Caco-2 (cell line): ENCODE measurements at regions of chr16 and their contacts with region 1.

Region 1: DNA sequence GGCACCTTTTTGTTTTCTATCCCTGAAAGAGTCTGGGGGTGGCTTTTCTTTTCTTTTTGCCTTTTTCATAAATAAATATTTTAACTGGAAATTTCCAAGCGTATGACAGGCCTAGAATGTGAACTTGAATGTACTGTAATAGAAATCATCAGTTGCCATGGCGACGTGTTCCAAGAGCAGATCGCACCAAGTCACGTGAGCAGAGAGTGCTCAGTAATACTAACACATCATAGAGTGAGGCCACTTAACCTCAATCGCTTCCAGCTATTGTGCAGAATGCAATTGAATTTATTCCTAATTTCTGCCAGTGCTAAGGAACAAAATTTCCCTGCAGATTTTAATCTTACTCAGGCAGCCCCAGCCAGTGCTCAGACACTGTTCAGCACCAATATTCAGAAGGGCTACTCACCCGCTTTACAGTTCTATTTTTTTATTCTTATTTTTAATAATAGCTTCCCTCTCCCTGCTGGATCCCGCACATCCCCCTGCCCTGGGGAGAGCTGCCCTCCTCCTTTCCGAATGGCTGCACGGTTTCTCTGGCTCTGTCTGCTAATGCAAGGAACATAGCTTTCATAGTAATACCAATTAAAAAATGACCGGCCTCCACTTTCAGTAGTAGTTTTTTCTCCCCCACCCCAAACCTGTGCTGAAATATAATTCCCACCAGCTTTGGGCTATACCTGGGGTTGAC is 26.2 kb upstream of the PMFBP1 start:
- DNase-seq: no peak
- H3K4me3 ChIP-seq: no peak overlapping the region
- H3K4me3 Mint-ChIP-seq: no peak overlapping the region
- H3K27ac Mint-ChIP-seq: no peak overlapping the region
- H3K4me1 ChIP-seq: peaks cover 13% of the 10 kb centered on the region
- H3K4me1 Mint-ChIP-seq: peaks cover 12% of the 10 kb centered on the region
- H3K27me3 ChIP-seq: peaks cover 2% of the 10 kb centered on the region
- H3K27me3 Mint-ChIP-seq: peaks cover 13% of the 10 kb centered on the region
- CTCF ChIP-seq: no peak

Region 2: DNA sequence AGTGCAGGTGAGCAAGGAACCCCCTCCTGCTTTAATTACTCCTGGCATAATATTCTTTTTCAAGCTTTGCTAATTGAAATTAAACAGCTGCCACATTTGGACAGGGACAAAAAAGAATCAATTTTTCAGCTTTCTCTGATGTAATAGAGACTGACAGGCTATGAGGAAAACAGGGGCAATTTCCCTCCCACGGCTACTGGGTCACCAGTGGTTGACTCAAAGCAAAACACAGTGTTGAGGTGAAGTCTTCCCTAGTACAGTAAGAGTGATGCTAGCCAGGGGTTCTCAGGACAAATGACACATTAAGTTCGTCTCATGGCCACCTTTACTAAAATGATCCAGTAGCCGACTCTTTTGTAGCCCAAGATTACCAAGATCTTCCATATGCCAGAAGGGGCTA is 12.4 kb after region 1 on chr16:
- CTCF ChIA-PET with region 1: interaction called, 10 read pairs
- POLR2A ChIA-PET with region 1: no interaction called
- intact Hi-C with region 1: no loop called
- DNase-seq: no peak
- H3K4me3 ChIP-seq: no peak overlapping the region
- H3K4me3 Mint-ChIP-seq: no peak overlapping the region
- H3K27ac Mint-ChIP-seq: no peak overlapping the region
- H3K4me1 ChIP-seq: no peaks in the 10 kb centered on the region
- H3K4me1 Mint-ChIP-seq: no peaks in the 10 kb centered on the region
- H3K27me3 ChIP-seq: no peaks in the 10 kb centered on the region
- H3K27me3 Mint-ChIP-seq: peaks cover 9% of the 10 kb centered on the region
- CTCF ChIP-seq: no peak

Region 3: GRCh38 chr16:72236866-72237265 is 38.7 kb after region 1 on chr16:
- CTCF ChIA-PET with region 1: interaction called, 3 read pairs
- POLR2A ChIA-PET with region 1: no interaction called
- intact Hi-C with region 1: loop called (anchors 5 kb)
- DNase-seq: no peak
- H3K4me3 ChIP-seq: no peak overlapping the region
- H3K4me3 Mint-ChIP-seq: no peak overlapping the region
- H3K27ac Mint-ChIP-seq: no peak overlapping the region
- H3K4me1 ChIP-seq: no peaks in the 10 kb centered on the region
- H3K4me1 Mint-ChIP-seq: no peaks in the 10 kb centered on the region
- H3K27me3 ChIP-seq: no peaks in the 10 kb centered on the region
- H3K27me3 Mint-ChIP-seq: peaks cover 3% of the 10 kb centered on the region
- CTCF ChIP-seq: no peak

Region 4: DNA sequence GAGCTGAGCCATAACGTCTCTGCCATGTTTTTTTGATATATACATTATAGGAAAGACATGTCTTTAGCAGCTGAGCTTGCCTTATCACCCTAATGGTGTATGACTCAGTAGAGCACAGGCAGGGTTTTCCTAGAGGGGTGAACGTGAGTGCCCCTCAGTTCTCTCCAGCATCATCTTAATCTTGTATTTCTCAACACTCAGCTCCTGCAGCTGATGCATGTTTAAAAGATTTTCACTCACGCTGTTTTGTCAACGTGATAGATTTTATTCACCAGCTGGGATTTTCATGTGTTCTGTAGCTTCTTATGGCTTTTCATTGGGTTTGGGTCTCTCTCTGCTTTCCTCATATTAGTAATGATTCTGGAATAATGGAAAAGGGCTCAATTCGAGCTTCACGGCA is 159.7 kb after region 1 on chr16:
- CTCF ChIA-PET with region 1: no interaction called
- POLR2A ChIA-PET with region 1: no interaction called
- intact Hi-C with region 1: no loop called
- DNase-seq: no peak
- H3K4me3 ChIP-seq: no peak overlapping the region
- H3K4me3 Mint-ChIP-seq: no peak overlapping the region
- H3K27ac Mint-ChIP-seq: no peak overlapping the region
- H3K4me1 ChIP-seq: no peaks in the 10 kb centered on the region
- H3K4me1 Mint-ChIP-seq: no peaks in the 10 kb centered on the region
- H3K27me3 ChIP-seq: no peaks in the 10 kb centered on the region
- H3K27me3 Mint-ChIP-seq: no peaks in the 10 kb centered on the region
- CTCF ChIP-seq: no peak

Region 5: DNA sequence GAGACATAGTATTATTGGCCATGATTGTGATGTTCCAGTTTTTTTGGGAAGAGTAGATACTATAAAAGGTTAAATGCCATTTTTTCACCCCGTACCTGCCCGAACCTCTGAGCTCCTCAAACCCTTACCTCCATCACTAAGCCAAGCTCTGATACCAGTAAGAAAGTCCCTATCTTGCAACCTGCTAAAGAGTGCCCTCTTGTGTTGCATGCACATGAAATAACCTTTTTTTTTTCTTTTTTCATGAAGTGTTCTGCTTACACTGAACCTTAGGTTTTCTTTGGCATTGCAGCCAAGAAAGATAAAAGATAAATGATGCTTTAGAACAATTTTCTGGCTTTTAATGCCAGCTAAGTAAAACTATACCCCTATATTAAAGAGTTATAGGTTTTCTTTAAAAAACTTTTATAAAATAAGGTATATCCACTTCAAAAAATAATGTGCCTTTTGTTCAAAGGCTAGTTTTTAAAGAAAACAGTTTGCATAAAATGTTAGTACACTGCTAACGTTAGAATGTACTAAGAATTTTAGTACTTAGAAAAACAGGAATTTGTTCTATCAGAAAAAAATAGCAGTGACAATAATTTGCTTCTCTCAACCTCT is 269.1 kb after region 1 on chr16:
- CTCF ChIA-PET with region 1: interaction called, 20 read pairs
- POLR2A ChIA-PET with region 1: no interaction called
- intact Hi-C with region 1: loop called (anchors 5 kb)
- DNase-seq: peak in 1 of 2 experiments; percentile 53
- H3K4me3 ChIP-seq: no peak overlapping the region
- H3K4me3 Mint-ChIP-seq: no peak overlapping the region
- H3K27ac Mint-ChIP-seq: no peak overlapping the region
- H3K4me1 ChIP-seq: no peaks in the 10 kb centered on the region
- H3K4me1 Mint-ChIP-seq: no peaks in the 10 kb centered on the region
- H3K27me3 ChIP-seq: no peaks in the 10 kb centered on the region
- H3K27me3 Mint-ChIP-seq: no peaks in the 10 kb centered on the region
- CTCF ChIP-seq: peak; percentile 67 to 84